Activated CD4-positive, alpha-beta T cell treated with anti-CD3 and anti-CD28 coated beads, Interleukin-2, amount 10 ng/mL, durations not matched to agents 7 days and 5 days (primary cell): ENCODE measurements at regions of chr4 and their contacts with region 1.

Region 1: DNA sequence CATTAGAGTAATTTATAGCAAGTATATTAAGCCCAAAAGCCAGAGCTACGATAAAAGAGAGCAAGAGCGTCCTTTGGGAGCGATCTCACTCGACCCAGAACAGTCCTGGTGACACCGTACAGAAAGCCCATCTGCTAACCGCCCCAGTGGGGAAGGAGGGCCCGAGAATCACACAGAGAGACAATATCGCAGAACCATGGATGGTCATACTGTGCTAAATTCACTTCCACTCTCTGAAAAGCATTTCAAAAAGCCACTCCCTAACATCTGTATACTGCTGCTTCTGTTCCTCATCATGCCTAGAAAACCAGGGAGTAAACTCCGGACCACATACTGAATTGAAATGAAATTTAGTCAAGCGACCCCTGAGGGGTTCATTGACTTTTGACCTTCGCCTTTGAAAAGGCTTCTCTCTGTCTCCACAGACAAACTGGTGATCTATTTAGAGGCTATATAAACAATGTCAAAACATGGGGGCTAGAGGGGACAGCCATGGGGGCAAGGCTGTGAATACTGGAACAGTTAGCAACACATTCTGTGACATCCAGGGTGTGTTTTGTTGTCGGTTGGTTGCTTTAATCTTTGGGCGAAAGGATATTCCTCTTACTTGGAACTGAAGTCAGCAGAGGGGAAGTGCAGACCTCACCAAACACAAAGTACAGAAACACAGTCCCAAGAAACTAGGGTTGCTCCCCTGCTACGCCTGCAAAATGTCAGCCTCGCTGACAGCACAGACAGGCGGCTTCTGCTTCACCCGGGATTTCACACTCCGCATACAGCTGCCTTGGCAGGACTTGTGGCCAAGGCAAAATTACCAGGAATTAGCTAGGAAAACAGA is 129.0 kb upstream of the RASGEF1B start:
- DNase-seq: no peak
- H3K4me3 Mint-ChIP-seq: no peak overlapping the region
- H3K27ac Mint-ChIP-seq: no peak overlapping the region
- H3K4me1 Mint-ChIP-seq: no peaks in the 10 kb centered on the region
- H3K27me3 Mint-ChIP-seq: no peaks in the 10 kb centered on the region

Region 2: GRCh38 chr4:81466841-81467671 is 133.7 kb before region 1 on chr4:
- CTCF ChIA-PET with region 1: no interaction called
- POLR2A ChIA-PET with region 1: interaction called, 13 read pairs
- DNase-seq: peak; percentile 88
- H3K4me3 Mint-ChIP-seq: no peak overlapping the region
- H3K27ac Mint-ChIP-seq: no peak overlapping the region
- H3K4me1 Mint-ChIP-seq: peaks cover 18% of the 10 kb centered on the region
- H3K27me3 Mint-ChIP-seq: peaks cover 4% of the 10 kb centered on the region

Region 3: DNA sequence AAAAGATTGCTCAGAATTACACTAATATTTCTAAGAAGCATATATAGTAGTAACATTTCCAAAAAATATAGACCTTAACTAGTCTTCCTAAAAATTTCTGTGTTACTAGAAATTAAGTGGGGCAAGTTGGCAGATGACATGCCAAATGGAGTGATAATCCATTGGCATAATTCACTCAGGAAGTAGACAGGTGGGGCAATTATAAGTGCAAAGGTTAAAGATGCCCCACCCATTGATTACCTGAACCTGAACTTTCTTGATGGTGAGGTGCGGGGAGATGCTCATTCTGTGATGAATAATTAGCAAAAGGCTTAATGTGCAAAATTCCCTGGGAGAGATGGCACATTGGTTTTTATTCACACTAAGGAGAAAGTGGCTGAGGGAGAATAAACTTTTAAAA is 16.8 kb after region 1 on chr4:
- CTCF ChIA-PET with region 1: no interaction called
- POLR2A ChIA-PET with region 1: no interaction called
- DNase-seq: no peak
- H3K4me3 Mint-ChIP-seq: no peak overlapping the region
- H3K27ac Mint-ChIP-seq: no peak overlapping the region
- H3K4me1 Mint-ChIP-seq: no peaks in the 10 kb centered on the region
- H3K27me3 Mint-ChIP-seq: no peaks in the 10 kb centered on the region

Region 4: DNA sequence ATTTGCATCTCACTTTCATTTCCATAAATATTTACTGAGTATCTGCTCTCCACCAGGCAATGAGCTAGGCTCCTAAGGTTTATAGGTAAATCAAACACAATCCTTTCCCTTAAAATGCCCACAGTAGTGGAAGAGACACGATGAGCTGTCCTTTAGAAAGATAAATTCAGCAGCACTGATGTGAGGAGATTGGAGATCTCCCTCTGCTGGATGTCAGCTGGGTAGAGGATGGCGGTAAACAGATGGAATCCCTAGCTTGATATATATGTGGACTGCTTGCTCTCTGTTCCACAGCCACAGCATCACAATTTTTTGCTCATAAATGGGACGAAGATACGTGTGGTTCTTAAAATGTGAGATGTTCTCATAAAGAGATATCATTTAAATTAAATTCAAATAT is 87.3 kb after region 1 on chr4:
- CTCF ChIA-PET with region 1: no interaction called
- POLR2A ChIA-PET with region 1: no interaction called
- DNase-seq: no peak
- H3K4me3 Mint-ChIP-seq: no peak overlapping the region
- H3K27ac Mint-ChIP-seq: no peak overlapping the region
- H3K4me1 Mint-ChIP-seq: no peaks in the 10 kb centered on the region
- H3K27me3 Mint-ChIP-seq: no peaks in the 10 kb centered on the region